ENCODE measurements at regions of chr7 and their contacts with region 1.

Region 1: DNA sequence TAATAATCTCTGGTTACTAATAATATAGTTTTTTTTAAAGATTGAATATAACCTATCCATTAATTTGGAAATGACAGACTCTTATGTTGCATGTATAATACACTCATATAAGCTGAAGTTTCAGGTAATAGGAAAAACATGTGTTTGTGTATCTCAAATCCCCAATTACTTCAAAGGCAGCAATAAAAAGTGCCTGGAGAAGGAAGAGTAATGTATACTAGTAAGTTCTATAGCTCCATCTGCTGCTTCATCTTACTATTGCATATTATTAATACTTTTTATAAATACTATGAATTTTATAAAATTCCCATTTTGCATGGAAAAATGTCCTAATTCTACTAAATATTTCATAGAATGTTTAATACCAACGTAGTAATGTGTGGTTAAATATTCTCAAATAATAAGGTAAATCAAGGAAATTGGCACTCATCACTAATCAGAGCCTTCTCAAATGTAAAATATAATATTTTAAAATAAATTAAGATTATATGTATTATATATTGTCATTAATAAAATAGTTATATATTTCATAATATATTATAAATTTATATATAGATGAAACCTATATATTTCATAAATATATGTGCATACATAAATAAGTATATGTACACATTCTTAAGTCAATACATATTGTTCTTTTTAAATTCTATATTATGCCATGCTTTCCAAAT is 311.9 kb downstream of the HGF start:
- H3K4me3 Mint-ChIP-seq: no peak overlapping the region
- H3K27ac Mint-ChIP-seq: no peak overlapping the region
- H3K4me1 Mint-ChIP-seq: no peaks in the 10 kb centered on the region
- H3K27me3 Mint-ChIP-seq: no peaks in the 10 kb centered on the region

Region 2: GRCh38 chr7:80428161-80429054 is 1029.6 kb before region 1 on chr7:
- intact Hi-C with region 1: loop called (anchors 10 kb)
- H3K4me3 Mint-ChIP-seq: no peak overlapping the region
- H3K27ac Mint-ChIP-seq: no peak overlapping the region
- H3K4me1 Mint-ChIP-seq: peaks cover 13% of the 10 kb centered on the region
- H3K27me3 Mint-ChIP-seq: no peaks in the 10 kb centered on the region

Region 3: GRCh38 chr7:81399471-81399870 is 58.5 kb before region 1 on chr7:
- intact Hi-C with region 1: loop called (anchors 10 kb)
- H3K4me3 Mint-ChIP-seq: no peak overlapping the region
- H3K27ac Mint-ChIP-seq: no peak overlapping the region
- H3K4me1 Mint-ChIP-seq: no peaks in the 10 kb centered on the region
- H3K27me3 Mint-ChIP-seq: no peaks in the 10 kb centered on the region